Activated CD4-positive, alpha-beta T cell treated with anti-CD3 and anti-CD28 coated beads for 36 hours (primary cell): ENCODE measurements at regions of chr6 and their contacts with region 1.

Region 1: GRCh38 chr6:137866914-137867684 is at the start of gene TNFAIP3:
- DNase-seq: peak; percentile 96
- ATAC-seq: peak; percentile 65
- H3K4me3 Mint-ChIP-seq: peak within 1 kb of the TSS; percentile 91
- H3K27ac Mint-ChIP-seq: peak within 1 kb of the TSS; percentile 99
- H3K4me1 Mint-ChIP-seq: peaks cover 32% of the 10 kb centered on the region
- H3K27me3 Mint-ChIP-seq: no peaks in the 10 kb centered on the region
- total RNA-seq, gene TNFAIP3: 284 to 371 TPM

Region 2: DNA sequence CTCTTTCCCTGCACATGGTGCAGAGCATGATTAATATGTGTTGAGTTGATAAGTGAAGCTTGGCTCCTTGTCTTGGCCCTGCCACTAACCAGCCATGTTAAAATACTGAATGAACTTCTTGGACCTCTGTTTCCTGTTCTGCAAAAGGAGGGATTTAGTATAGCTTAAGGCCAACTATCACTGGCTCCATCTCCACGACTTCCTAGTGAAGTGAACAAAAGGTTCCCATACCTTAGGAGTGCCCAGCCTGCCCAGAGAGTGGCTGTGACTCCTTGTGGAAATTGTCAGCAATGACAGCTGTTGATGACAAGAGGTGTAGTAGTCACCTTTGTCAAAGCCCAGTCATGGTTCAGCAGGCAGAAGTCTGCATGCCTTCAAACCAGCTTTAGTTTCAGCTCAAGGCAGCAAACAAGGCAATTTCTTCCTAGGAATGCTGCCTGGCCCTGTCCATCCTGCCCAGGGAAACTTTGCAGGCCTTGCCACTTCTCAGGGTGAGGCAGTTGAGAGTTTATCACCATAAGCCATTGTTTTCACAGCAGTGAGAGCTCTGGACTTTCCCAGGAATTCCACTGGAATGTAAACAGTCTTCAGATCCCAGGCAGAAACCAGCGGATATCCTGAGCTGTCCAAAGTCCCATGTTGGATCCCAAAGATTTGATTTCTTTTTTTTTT is 169.7 kb before region 1 on chr6:
- CTCF ChIA-PET with region 1: interaction called, 19 read pairs
- POLR2A ChIA-PET with region 1: interaction called, 12 read pairs
- intact Hi-C with region 1: no loop called
- DNase-seq: peak; percentile 46
- ATAC-seq: peak; percentile 43
- H3K4me3 Mint-ChIP-seq: no peak overlapping the region
- H3K27ac Mint-ChIP-seq: peak overlapping the region; percentile 60
- H3K4me1 Mint-ChIP-seq: peaks cover 47% of the 10 kb centered on the region
- H3K27me3 Mint-ChIP-seq: peaks cover 7% of the 10 kb centered on the region

Region 3: DNA sequence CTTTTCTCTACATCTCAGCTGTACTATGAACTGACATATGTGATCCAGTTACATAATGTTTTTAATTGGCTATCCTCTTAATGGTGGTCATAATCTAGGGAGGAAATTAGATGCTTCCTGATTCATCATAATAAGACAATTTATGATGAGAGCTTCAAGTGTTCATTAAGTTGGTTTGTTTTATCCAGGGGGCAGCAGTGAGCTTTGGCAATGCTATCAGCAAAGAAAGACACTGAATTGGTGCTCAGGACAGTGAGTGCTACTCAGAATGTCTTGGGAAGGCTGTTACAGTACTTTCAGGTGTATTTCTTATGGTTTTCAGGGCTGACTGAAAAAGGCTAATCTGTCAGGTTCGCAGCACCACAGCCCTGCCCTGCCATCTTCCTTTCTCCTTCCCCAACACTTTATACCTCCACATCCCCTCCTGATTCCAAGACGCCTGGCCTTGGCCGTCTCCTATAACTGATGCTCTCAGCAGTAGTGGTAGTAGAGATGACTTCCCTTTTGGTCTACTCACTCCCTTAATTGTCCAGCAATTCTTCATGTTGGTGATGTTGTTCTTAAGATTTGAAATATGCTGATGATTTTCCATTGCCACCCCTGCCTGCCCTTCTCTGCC is 67.0 kb before region 1 on chr6:
- CTCF ChIA-PET with region 1: interaction called, 137 read pairs
- POLR2A ChIA-PET with region 1: interaction called, 9 read pairs
- intact Hi-C with region 1: loop called (anchors 1 kb)
- DNase-seq: peak; percentile 76
- ATAC-seq: peak; percentile 80
- H3K4me3 Mint-ChIP-seq: no peak overlapping the region
- H3K27ac Mint-ChIP-seq: peak overlapping the region; percentile 84
- H3K4me1 Mint-ChIP-seq: peaks cover 65% of the 10 kb centered on the region
- H3K27me3 Mint-ChIP-seq: no peaks in the 10 kb centered on the region

Region 4: DNA sequence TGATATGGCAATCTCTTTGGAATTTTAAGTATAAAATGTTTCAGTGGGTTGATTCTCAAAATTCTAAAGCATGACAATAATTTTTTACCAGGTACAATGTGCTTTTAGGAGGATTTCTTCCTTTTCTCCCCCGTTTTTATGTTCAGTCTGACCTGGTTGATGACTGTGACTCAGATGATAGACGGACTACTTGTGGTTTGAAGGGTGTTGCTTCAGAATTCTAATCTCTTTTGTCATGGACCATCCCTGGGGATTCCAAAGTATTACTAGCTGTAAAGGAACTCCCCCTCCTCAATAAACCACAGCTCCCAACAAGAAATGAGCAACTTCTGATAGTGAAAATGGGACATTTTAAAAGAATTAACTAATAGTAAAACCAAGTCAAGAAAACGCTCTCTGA is 35.0 kb before region 1 on chr6:
- CTCF ChIA-PET with region 1: interaction called, 18 read pairs
- POLR2A ChIA-PET with region 1: interaction called, 11 read pairs
- intact Hi-C with region 1: loop called in 1 of 2 experiments (anchors 1 kb)
- DNase-seq: no peak
- ATAC-seq: no peak
- H3K4me3 Mint-ChIP-seq: no peak overlapping the region
- H3K27ac Mint-ChIP-seq: peak overlapping the region; percentile 32
- H3K4me1 Mint-ChIP-seq: peaks cover 58% of the 10 kb centered on the region
- H3K27me3 Mint-ChIP-seq: no peaks in the 10 kb centered on the region

Region 5: DNA sequence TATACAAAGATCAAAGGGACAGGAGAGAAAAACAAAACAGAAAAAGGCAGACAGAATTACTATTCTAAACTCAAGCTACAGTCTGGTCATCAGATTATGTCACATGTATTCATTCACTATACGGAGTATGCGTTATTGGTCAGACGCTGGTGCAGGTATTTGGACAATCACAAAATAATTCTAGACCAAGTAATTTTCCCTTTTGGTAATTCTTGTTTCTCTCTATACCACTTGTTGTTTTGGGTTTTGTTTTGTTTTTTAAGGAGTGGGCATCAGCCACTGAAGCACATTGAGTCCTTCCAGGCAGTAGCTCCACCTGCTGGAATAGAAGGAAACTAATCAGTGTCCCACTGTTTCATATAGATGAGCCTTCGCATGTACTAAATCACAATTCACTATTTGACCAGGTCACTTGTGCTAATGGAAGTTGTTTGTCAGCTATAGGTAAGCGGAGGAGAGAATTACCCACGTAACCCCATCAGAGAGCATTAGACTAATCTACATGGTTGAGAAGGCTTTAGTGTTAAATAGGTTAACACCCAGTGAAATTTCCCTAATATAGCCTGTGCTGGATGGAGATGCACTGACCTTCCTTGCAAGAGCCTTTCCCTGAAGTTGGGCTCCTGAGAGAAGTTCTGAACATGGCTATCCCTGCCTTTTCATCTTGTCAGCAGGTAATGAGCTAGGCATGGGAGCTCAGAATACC is 77.8 kb after region 1 on chr6:
- CTCF ChIA-PET with region 1: interaction called, 47 read pairs
- POLR2A ChIA-PET with region 1: interaction called, 5 read pairs
- intact Hi-C with region 1: loop called (anchors 1 kb)
- DNase-seq: peak; percentile 36
- ATAC-seq: peak; percentile 37
- H3K4me3 Mint-ChIP-seq: no peak overlapping the region
- H3K27ac Mint-ChIP-seq: peak overlapping the region; percentile 23
- H3K4me1 Mint-ChIP-seq: peaks cover 52% of the 10 kb centered on the region
- H3K27me3 Mint-ChIP-seq: no peaks in the 10 kb centered on the region

Region 6: GRCh38 chr6:138211027-138211581 is 344.0 kb after region 1 on chr6:
- CTCF ChIA-PET with region 1: no interaction called
- POLR2A ChIA-PET with region 1: no interaction called
- intact Hi-C with region 1: no loop called
- DNase-seq: no peak
- ATAC-seq: no peak
- H3K4me3 Mint-ChIP-seq: no peak overlapping the region
- H3K27ac Mint-ChIP-seq: no peak overlapping the region
- H3K4me1 Mint-ChIP-seq: no peaks in the 10 kb centered on the region
- H3K27me3 Mint-ChIP-seq: peaks cover 5% of the 10 kb centered on the region